ENCODE measurements at regions of chr19 and their contacts with region 1.

Region 1: GRCh38 chr19:47243776-47244547 is 12.4 kb upstream of the CCDC9 start:
- DNase-seq: peak; percentile 95
- ATAC-seq: peak; percentile 83
- H3K4me3 Mint-ChIP-seq: peak overlapping the region; percentile 66
- H3K27ac Mint-ChIP-seq: peak overlapping the region; percentile 92
- H3K4me1 Mint-ChIP-seq: peaks cover 42% of the 10 kb centered on the region
- H3K27me3 Mint-ChIP-seq: no peaks in the 10 kb centered on the region

Region 2: DNA sequence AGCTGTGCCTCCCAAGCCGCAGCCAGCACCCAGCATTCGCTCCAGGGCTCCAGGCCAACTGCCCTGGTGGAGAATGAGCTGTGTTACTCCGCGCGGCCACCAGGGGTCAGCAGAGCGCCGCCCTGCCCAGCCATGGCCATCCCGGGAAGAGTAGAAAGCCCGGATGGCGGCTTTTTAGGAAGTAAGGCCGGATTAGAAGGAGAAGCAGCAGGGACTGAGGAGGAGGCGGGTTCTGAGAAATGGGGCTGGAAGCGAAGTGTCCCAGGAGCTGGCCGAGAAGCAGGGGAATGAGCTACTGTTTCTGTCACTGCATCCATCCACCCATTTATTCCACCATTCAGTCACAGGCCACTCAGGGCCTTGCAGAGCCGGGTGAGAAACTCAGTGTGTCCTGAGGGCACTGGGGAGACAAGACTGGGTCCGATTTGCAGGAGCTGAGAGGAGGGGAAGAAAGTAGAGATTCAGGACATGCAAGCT is 230.9 kb before region 1 on chr19:
- CTCF ChIA-PET with region 1: interaction called, 14 read pairs
- POLR2A ChIA-PET with region 1: interaction called, 3 read pairs
- DNase-seq: peak; percentile 66
- ATAC-seq: peak; percentile 81
- H3K4me3 Mint-ChIP-seq: no peak overlapping the region
- H3K27ac Mint-ChIP-seq: peak overlapping the region; percentile 10
- H3K4me1 Mint-ChIP-seq: peaks cover 10% of the 10 kb centered on the region
- H3K27me3 Mint-ChIP-seq: peaks cover 8% of the 10 kb centered on the region

Region 3: GRCh38 chr19:47130591-47131227 is 113.3 kb before region 1 on chr19 and contains the start of gene SAE1:
- CTCF ChIA-PET with region 1: interaction called, 30 read pairs
- POLR2A ChIA-PET with region 1: interaction called, 9 read pairs
- DNase-seq: peak; percentile 94
- ATAC-seq: peak; percentile 91
- H3K4me3 Mint-ChIP-seq: peak within 1 kb of the TSS; percentile 99
- H3K27ac Mint-ChIP-seq: peak within 1 kb of the TSS; percentile 98
- H3K4me1 Mint-ChIP-seq: peaks cover 51% of the 10 kb centered on the region
- H3K27me3 Mint-ChIP-seq: no peaks in the 10 kb centered on the region
- total RNA-seq, gene SAE1: 165 to 175 TPM

Region 4: DNA sequence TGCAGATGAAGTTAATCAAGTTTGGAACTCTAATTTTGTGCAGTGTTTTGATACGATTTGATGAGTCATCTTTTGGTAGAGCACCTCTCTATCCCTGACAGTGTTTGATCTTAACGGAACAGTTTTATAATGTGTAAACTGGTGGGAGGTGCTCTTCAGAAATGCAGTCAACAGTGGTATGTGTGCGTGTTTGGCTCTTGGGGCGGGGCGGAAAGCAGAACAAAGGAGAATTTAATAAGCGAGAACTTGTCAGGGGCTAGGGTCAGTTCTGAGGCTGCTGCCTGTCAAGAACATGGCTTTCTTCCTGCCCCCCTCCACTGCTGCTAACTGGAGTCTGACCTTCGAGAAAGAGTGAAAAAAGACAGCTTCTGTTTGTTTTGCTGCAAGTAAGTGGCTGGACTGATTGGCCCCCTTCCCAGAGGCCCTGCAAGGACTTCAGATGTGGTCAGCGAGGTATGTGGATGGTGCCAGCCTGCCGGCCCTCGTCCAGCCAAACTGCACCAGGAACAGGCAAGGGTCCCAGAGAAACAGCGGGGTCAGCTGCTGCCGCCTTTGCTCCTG is 53.7 kb before region 1 on chr19:
- CTCF ChIA-PET with region 1: interaction called, 72 read pairs
- POLR2A ChIA-PET with region 1: interaction called, 5 read pairs
- DNase-seq: peak; percentile 34
- ATAC-seq: no peak
- H3K4me3 Mint-ChIP-seq: no peak overlapping the region
- H3K27ac Mint-ChIP-seq: peak overlapping the region; percentile 27
- H3K4me1 Mint-ChIP-seq: peaks cover 61% of the 10 kb centered on the region
- H3K27me3 Mint-ChIP-seq: no peaks in the 10 kb centered on the region

Region 5: GRCh38 chr19:47225746-47226425 is 18.1 kb before region 1 on chr19:
- CTCF ChIA-PET with region 1: interaction called, 143 read pairs
- POLR2A ChIA-PET with region 1: interaction called, 44 read pairs
- DNase-seq: peak; percentile 88
- ATAC-seq: peak; percentile 63
- H3K4me3 Mint-ChIP-seq: peak overlapping the region; percentile 37
- H3K27ac Mint-ChIP-seq: peak overlapping the region; percentile 90
- H3K4me1 Mint-ChIP-seq: peaks cover 20% of the 10 kb centered on the region
- H3K27me3 Mint-ChIP-seq: no peaks in the 10 kb centered on the region

Region 6: GRCh38 chr19:47273313-47273977 is 29.5 kb after region 1 on chr19:
- CTCF ChIA-PET with region 1: interaction called, 10 read pairs
- POLR2A ChIA-PET with region 1: interaction called, 9 read pairs
- DNase-seq: peak; percentile 94
- ATAC-seq: peak; percentile 80
- H3K4me3 Mint-ChIP-seq: peak overlapping the region; percentile 93
- H3K27ac Mint-ChIP-seq: peak overlapping the region; percentile 98
- H3K4me1 Mint-ChIP-seq: peaks cover 27% of the 10 kb centered on the region
- H3K27me3 Mint-ChIP-seq: no peaks in the 10 kb centered on the region

Region 7: GRCh38 chr19:47483800-47484690 is 240.1 kb after region 1 on chr19 and contains the start of gene KPTN:
- CTCF ChIA-PET with region 1: no interaction called
- POLR2A ChIA-PET with region 1: no interaction called
- DNase-seq: peak; percentile 93
- ATAC-seq: peak; percentile 91
- H3K4me3 Mint-ChIP-seq: peak within 1 kb of the TSS; percentile 97
- H3K27ac Mint-ChIP-seq: peak within 1 kb of the TSS; percentile 100
- H3K4me1 Mint-ChIP-seq: peaks cover 42% of the 10 kb centered on the region
- H3K27me3 Mint-ChIP-seq: no peaks in the 10 kb centered on the region
- total RNA-seq, gene KPTN: 12.6 to 13.0 TPM

Measured in activated CD8-positive, alpha-beta T cell treated with anti-CD3 and anti-CD28 coated beads, Interleukin-2, amount 10 ng/mL, durations not matched to agents 7 days and 5 days (primary cell).